ENCODE measurements at regions of chr9 and their contacts with region 1.

Region 1: GRCh38 chr9:128296337-128297220 is 20.5 kb downstream of the SWI5 start:
- DNase-seq: no peak
- H3K4me3 ChIP-seq: no peak overlapping the region
- H3K27ac ChIP-seq: no peak overlapping the region
- H3K4me1 ChIP-seq: peaks cover 5 to 8% of the 10 kb centered on the region in 2 experiments; a peak in 2 of 4 replicates
- H3K27me3 ChIP-seq: no peaks in the 10 kb centered on the region
- CTCF ChIP-seq: no peak
- EP300 ChIP-seq: no peak
- RAD21 ChIP-seq: no peak

Region 2: GRCh38 chr9:128103589-128103962 is 193.0 kb before region 1 on chr9:
- CTCF ChIA-PET with region 1: no interaction called
- POLR2A ChIA-PET with region 1: no interaction called
- DNase-seq: no peak
- H3K4me3 ChIP-seq: no peak overlapping the region
- H3K27ac ChIP-seq: no peak overlapping the region; a peak in 1 of 4 replicates
- H3K4me1 ChIP-seq: peaks cover 10 to 20% of the 10 kb centered on the region in 2 experiments; a peak in 3 of 4 replicates
- H3K27me3 ChIP-seq: no peaks in the 10 kb centered on the region
- CTCF ChIP-seq: peak; percentile 27
- EP300 ChIP-seq: no peak
- RAD21 ChIP-seq: no peak

Region 3: DNA sequence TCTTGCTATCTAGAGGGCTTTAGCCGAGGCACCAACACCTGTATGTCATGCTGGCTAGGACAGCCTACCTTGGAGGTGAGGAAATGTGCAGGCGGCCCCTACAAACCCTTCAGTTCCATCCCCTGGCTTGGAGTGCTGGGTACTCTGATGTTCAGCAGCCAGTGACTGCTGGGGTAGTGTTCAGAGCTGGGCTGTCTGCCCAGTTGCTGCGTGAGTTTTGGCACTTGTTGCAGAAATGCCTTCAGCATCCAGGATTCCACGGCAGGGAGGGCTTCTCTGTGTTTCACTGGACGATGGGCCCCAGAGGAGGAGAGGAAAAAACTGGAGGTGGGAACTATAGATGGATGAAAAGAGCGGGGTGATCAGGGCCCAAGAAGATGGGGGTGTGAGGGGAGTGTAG is 10.1 kb before region 1 on chr9:
- CTCF ChIA-PET with region 1: interaction called, 18 read pairs
- POLR2A ChIA-PET with region 1: interaction called, 3 read pairs
- DNase-seq: no peak
- H3K4me3 ChIP-seq: no peak overlapping the region
- H3K27ac ChIP-seq: no peak overlapping the region
- H3K4me1 ChIP-seq: no peaks in the 10 kb centered on the region
- H3K27me3 ChIP-seq: no peaks in the 10 kb centered on the region
- CTCF ChIP-seq: no peak
- EP300 ChIP-seq: no peak
- RAD21 ChIP-seq: no peak

Region 4: DNA sequence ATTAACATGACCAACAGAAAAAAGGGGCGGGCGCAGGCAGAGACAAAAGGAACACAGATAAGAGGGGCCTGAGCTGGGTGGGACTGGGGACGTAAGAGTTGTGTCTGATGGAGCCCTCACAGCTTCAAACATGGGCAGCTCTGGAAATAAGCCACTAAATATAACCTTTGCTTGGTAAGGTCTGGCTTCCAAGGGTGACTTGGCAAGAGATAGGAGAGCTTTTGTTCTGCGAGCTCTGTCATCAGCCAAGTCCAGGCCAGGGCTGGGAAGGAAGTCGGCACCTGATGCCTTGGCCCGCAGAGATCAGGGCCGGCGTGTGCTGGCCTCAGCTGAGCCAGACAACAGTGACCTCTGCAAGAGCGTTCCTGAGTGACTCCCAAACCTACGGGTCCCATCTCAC is 13.9 kb after region 1 on chr9:
- CTCF ChIA-PET with region 1: interaction called, 19 read pairs
- POLR2A ChIA-PET with region 1: interaction called, 4 read pairs
- DNase-seq: no peak
- H3K4me3 ChIP-seq: no peak overlapping the region
- H3K27ac ChIP-seq: no peak overlapping the region
- H3K4me1 ChIP-seq: peaks cover 0 to 12% of the 10 kb centered on the region in 2 experiments; a peak in 1 of 4 replicates
- H3K27me3 ChIP-seq: no peaks in the 10 kb centered on the region
- CTCF ChIP-seq: no peak
- EP300 ChIP-seq: no peak
- RAD21 ChIP-seq: no peak

Region 5: GRCh38 chr9:128341435-128341849 is 44.9 kb after region 1 on chr9:
- CTCF ChIA-PET with region 1: interaction called, 80 read pairs
- POLR2A ChIA-PET with region 1: no interaction called
- DNase-seq: peak; percentile 84
- H3K4me3 ChIP-seq: peak overlapping the region; percentile 73 to 89
- H3K27ac ChIP-seq: peak overlapping the region in 1 of 2 experiments; percentile 20; a peak in 2 of 4 replicates
- H3K4me1 ChIP-seq: peaks cover 0 to 6% of the 10 kb centered on the region in 2 experiments; a peak in 1 of 4 replicates
- H3K27me3 ChIP-seq: no peaks in the 10 kb centered on the region
- CTCF ChIP-seq: peak; percentile 66
- EP300 ChIP-seq: no peak
- RAD21 ChIP-seq: peak; percentile 64

Region 6: DNA sequence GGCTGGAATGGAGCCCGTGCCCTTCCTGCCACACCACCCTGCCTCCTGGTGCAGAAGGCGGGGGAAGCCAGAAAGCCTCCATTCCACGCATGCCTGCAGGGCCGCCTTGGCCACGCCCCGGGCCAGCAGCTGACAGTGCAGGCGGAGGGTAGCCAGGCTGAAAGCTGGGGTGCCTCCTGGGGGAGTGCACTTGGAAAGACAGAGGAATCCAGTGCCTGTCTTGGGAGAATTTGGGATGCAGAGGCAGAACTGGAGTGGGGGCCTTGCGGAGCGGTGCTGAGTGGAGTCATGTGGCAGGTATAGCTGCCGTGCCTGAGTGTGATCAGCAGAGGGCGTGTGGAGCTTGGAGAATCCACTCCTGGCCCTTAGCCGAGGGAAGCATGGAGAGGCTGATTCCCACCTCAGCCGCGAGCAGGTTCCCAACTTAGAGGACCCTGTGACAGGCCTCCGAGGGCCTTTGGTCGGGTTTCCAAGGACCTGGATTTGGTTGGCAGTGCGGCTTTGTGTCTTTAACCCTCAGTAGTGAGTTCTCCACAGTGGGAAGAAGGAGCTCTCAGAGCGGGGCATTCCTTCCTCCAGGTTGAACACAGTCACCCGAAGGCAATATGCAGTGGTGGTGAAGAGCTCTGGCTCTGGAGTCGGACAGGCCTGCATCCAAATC is 65.5 kb after region 1 on chr9:
- CTCF ChIA-PET with region 1: interaction called, 26 read pairs
- POLR2A ChIA-PET with region 1: no interaction called
- DNase-seq: peak; percentile 92
- H3K4me3 ChIP-seq: peak overlapping the region; percentile 43 to 58
- H3K27ac ChIP-seq: peak overlapping the region; percentile 29 to 72; a peak in 3 of 4 replicates
- H3K4me1 ChIP-seq: peaks cover 7 to 8% of the 10 kb centered on the region in 2 experiments; a peak in 2 of 4 replicates
- H3K27me3 ChIP-seq: no peaks in the 10 kb centered on the region
- CTCF ChIP-seq: peak; percentile 90
- EP300 ChIP-seq: no peak
- RAD21 ChIP-seq: peak; percentile 86

Region 7: DNA sequence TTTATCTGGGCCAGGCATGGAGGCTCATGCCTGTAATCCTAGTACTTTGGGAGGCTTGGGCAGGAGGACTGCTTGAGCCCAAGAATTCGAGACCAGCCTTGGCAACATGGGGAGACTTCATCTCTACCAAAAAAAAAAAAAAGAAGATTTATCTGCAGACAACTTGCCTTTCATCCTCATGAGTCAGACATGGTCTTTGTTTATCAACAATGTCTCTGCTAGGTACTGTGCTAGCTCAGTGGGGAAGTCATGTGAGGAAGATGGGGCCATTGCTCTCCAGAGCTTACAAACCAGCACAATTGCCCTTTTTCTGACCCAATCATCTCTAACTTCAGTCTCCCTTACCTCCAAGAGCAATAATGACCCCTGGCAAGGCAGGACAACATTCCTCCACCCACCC is 76.2 kb after region 1 on chr9:
- CTCF ChIA-PET with region 1: no interaction called
- POLR2A ChIA-PET with region 1: no interaction called
- DNase-seq: no peak
- H3K4me3 ChIP-seq: peak overlapping the region in 1 of 2 experiments; percentile 78; a peak in 2 of 4 replicates
- H3K27ac ChIP-seq: peak overlapping the region; percentile 36 to 89; a peak in 2 of 4 replicates
- H3K4me1 ChIP-seq: peaks cover 0 to 20% of the 10 kb centered on the region in 2 experiments; a peak in 2 of 4 replicates
- H3K27me3 ChIP-seq: no peaks in the 10 kb centered on the region
- CTCF ChIP-seq: no peak
- EP300 ChIP-seq: no peak
- RAD21 ChIP-seq: no peak

Region 8: DNA sequence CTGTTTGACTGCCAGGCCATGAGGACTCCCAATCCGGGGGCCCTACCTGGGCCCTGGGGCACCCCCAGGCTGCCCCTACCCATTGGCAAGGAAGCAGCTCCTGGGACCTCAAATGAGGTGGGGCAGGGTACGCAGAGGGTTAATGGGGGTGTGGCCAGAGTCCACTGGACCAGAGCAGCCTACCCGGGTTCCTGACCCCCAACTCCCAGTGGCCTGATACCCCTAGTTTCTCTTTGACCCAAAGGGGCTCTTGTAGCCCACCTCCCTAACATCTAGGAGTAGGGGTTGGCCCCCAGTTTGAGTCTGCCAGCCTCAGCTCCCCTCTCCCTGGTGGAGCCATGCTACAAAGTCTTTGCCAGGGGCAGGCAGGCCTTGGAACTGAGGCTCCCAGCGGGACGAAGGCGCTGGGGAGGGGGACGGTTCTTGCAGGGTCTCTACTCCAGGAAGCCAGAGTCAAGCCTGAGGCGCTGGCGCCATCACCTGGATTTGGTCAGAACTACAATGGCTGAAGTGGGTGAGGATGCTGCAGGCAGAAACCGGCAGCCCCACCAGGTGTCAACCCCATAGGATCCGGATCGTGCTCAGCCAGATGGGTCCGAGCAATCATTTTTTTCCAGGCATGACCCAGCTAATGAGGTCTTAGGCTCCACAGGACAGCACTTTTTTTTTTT is 115.7 kb after region 1 on chr9:
- CTCF ChIA-PET with region 1: interaction called, 26 read pairs
- POLR2A ChIA-PET with region 1: no interaction called
- DNase-seq: peak; percentile 87
- H3K4me3 ChIP-seq: peak overlapping the region in 1 of 2 experiments; percentile 50; a peak in 1 of 4 replicates
- H3K27ac ChIP-seq: no peak overlapping the region
- H3K4me1 ChIP-seq: peaks cover 0 to 2% of the 10 kb centered on the region in 2 experiments; a peak in 1 of 4 replicates
- H3K27me3 ChIP-seq: no peaks in the 10 kb centered on the region; the same call in 1 of the 2 replicates
- CTCF ChIP-seq: peak; percentile 69
- EP300 ChIP-seq: no peak
- RAD21 ChIP-seq: peak; percentile 88